ENCODE measurements at regions of chr1 and their contacts with region 1.

Region 1: GRCh38 chr1:171107969-171108368 is 17.3 kb downstream of the FMO3 start:
- DNase-seq: no peak
- H3K4me3 ChIP-seq: no peak overlapping the region
- H3K27ac ChIP-seq: no peak overlapping the region
- H3K4me1 ChIP-seq: no peaks in the 10 kb centered on the region
- H3K27me3 ChIP-seq: no peaks in the 10 kb centered on the region
- CTCF ChIP-seq: no peak
- POLR2A ChIP-seq: no peak

Region 2: GRCh38 chr1:169630006-169630405 is 1478.0 kb before region 1 on chr1 and contains the start of gene SELP:
- intact Hi-C with region 1: no loop called
- DNase-seq: no peak
- H3K4me3 ChIP-seq: peak within 1 kb of the TSS in 1 of 3 donors; percentile 4
- H3K27ac ChIP-seq: peak within 1 kb of the TSS in 1 of 2 donors; percentile 13
- H3K4me1 ChIP-seq: no peaks in the 10 kb centered on the region
- H3K27me3 ChIP-seq: no peaks in the 10 kb centered on the region
- CTCF ChIP-seq: no peak
- POLR2A ChIP-seq: no peak
- total RNA-seq, gene SELP: 5.4 to 13.1 (median 10.1) TPM

Region 3: DNA sequence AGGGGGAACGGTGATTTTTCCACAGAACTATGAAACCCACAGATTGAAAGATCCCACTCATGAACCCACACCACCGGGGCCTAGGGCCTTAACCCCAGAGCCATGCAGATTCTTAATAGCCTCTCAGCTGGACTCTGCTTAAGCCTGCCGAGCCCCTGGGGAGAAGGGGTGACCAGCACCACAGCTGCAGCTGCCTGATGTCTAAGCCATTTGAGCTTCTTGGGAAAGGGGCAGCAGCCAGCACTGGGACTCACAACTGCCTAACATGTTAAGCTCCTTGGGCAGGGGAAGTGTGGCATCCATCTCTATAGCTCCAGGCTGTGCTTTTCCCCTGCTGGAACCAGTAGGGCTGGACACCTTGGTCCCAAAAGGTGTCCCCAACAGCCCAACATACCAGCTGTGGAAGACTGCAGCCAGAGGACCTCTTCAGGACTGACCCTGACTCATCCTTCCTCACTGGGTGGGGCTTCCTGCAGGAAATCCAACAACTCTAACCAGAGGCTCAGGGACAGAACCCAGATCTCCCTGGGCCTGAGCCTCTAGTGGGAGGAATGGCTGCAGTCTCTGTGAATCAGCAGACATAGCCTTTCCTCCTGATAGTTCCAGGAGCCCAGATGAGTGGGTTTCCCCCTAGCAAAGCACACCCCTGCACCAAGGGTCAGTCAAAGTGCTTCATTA is 51.9 kb before region 1 on chr1:
- intact Hi-C with region 1: no loop called
- DNase-seq: no peak
- H3K4me3 ChIP-seq: no peak overlapping the region
- H3K27ac ChIP-seq: no peak overlapping the region
- H3K4me1 ChIP-seq: no peaks in the 10 kb centered on the region
- H3K27me3 ChIP-seq: no peaks in the 10 kb centered on the region
- CTCF ChIP-seq: no peak
- POLR2A ChIP-seq: no peak

Region 4: DNA sequence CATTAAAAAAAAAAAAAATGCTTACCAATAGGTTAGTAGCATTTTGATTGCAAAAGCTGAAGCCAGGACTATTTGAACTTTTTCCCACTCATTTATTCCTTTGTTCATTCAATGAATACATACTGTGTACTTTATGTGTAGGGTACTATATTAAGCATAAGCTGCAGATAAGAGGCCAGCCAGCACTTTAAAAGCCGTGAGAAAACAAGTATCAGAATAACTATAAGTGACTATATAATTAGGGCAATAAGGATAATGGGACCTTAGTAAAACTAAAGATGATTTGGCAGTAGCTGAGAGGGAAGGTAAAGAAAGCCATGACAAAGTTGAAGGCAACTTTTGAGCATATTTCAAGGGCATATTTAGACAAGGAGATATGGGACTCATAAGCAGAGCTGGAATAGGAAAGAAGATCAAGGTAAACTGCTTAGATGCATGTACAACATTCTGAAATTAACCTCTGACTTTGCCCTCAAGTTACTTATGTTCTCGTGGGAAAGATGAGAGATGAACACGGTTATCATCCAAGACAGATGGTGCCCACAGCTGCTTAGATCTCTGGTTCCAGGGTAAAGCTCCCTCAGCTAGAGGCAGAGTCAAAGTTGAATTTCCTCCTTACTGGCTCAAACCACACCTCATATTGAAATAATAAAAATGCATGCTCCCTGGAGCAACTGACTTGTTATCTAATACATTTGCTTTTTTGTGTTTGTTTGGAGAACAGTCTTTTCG is 33.2 kb after region 1 on chr1:
- intact Hi-C with region 1: loop called (anchors 1 kb)
- DNase-seq: no peak
- H3K4me3 ChIP-seq: no peak overlapping the region
- H3K27ac ChIP-seq: peak overlapping the region; percentile 85 to 94
- H3K4me1 ChIP-seq: peaks cover 6 to 16% of the 10 kb centered on the region in 2 donors
- H3K27me3 ChIP-seq: no peaks in the 10 kb centered on the region
- CTCF ChIP-seq: no peak
- POLR2A ChIP-seq: no peak

Region 5: DNA sequence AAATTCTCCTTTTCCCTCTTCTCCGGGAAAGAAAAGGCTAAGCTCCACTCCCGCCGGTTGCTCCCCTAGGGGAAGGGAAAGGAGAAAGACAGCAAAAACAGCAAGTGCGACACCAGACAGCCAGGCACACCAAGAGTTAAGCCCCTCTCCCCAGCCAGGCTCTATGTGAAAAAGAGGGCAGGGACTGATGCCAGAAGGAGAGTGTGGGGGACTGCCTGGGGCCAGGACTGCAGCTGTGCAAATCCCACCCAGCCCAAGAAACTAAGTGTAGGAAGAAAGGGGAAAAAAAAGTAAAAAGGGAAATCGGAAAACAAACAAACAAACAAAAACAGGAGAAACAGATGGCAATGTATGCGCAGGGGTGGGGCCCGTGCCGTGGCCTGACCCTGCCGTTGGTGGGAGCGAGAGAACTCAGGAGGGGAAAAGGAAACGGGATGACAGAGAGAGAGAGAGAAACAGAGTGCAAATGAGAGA is 112.6 kb after region 1 on chr1:
- intact Hi-C with region 1: no loop called
- DNase-seq: no peak
- H3K4me3 ChIP-seq: peak overlapping the region in 2 of 3 donors; percentile 19 to 51
- H3K27ac ChIP-seq: peak overlapping the region; percentile 92
- H3K4me1 ChIP-seq: peaks cover 7 to 43% of the 10 kb centered on the region in 2 donors
- H3K27me3 ChIP-seq: no peaks in the 10 kb centered on the region
- CTCF ChIP-seq: no peak
- POLR2A ChIP-seq: no peak

Measured in breast epithelium (tissue), 4 donors.